ENCODE measurements at regions of chr1 and their contacts with region 1.

Region 1: GRCh38 chr1:36385410-36386257 is at the start of gene STK40:
- DNase-seq: peak; percentile 98
- H3K4me3 ChIP-seq: peak within 1 kb of the TSS; percentile 88
- CTCF ChIP-seq: no peak

Region 2: GRCh38 chr1:35947547-35947946 is 438.1 kb before region 1 on chr1:
- CTCF ChIA-PET with region 1: no interaction called
- POLR2A ChIA-PET with region 1: no interaction called
- DNase-seq: no peak
- H3K4me3 ChIP-seq: no peak overlapping the region
- CTCF ChIP-seq: no peak

Region 3: DNA sequence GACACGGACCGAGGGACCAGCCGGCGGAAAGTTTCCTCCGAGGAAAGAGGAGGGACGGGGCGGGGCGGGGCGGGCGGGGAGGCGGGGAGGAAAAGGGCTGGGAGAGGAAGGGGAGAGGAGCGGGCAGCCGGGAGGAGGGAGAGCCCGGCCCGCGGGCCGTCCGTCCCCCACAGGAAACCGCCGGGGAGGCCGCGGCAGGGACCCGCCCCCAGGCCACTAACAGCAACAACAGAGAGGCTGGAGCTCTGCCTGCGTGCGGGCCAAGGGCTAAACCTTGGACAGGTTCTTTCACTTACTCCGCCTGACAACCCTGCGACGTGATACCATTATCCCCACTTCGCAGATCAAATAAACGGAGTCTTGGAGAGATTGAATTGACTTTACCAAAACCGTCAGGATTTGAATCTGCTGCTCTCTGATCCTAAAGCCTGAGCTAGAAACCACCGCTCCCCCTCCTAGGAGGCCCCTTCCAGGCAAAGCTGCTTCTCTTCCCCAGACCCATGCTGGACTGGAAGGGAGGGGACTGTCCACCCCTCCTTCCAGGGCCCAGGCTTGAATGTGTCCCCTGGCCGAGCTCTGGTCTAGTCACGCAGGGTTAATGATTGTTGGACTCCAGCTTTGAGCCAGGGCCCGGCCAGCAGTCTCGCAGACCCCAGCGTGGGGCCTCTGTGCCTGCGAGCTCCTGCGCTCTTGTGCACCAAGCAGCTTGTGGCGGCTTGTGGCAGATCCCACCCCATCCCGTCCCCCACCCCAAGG is 61.9 kb before region 1 on chr1 and contains the start of gene EVA1B:
- CTCF ChIA-PET with region 1: interaction called, 4 read pairs
- POLR2A ChIA-PET with region 1: interaction called, 19 read pairs
- DNase-seq: no peak
- H3K4me3 ChIP-seq: peak within 1 kb of the TSS; percentile 78
- CTCF ChIP-seq: no peak

Region 4: DNA sequence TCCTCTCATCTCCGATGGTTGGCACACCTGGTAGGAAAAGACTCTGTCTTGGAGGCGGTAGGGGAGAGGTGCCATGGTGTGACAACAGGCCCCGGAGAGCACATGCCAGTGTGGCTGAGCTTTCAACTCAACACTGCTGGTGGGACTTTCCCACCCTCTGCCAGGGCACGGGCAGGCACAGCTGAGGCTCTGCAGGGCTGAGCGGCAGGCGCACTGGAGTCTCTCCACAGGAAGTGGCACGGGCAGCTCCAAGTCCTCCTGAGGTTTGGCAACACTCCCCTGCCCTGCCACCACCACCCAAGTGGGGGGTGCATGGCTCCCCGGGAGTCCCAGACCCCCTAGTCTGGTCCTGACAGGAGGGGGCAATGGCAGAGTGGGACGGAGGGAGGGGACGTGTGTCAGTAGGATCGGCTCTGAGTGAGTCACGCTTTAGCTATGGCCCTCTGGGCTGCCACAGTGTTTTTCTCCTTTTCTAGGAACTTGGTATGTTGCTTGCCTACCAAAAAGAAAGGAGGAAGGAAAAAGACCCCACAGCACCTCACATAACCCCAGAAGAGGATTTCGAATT is 34.9 kb before region 1 on chr1:
- CTCF ChIA-PET with region 1: interaction called, 4 read pairs
- POLR2A ChIA-PET with region 1: interaction called, 44 read pairs
- DNase-seq: no peak
- H3K4me3 ChIP-seq: peak overlapping the region; percentile 40
- CTCF ChIP-seq: no peak

Region 5: DNA sequence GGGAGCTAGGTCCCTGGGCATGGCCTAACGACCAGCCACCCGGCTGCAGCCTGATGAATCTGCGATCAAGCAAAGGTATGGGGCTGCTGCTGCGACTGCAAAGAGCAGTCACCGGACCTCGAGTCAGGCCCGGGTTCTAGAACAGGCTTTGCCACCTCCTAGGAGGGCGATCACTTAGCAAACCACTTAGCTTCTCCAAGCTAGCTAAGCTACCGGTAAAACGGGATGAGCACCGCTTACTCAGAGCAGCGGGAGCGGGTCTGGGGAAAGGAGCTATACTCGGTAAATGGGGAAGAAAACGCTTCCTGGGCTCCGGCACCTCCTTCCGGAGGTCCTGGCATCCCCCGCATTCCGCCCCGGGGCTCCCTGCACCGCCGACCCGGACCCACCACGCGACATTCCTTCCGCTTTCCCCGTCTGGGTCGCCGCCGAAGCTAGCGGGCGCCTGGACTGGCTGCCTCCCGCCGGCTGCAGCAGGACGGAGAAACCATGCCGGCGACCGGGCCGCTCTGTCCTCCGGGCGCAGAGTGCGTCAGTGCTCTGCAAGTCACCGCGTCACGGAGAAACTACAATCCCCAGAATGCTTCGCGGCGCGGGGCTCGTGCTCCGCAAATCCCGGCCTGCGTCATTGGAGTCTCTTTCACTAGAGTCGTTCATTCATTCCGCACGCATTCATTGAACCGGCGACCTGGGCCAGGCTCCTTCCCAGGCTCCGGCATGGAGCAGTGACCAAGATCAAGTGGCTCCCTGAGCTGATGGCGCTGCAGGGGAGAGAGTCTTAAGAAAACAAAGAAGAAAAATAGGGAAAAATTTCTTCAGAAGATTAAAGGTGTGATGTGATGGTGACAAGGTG is 12.0 kb after region 1 on chr1 and contains the start of gene LSM10:
- CTCF ChIA-PET with region 1: interaction called, 4 read pairs
- POLR2A ChIA-PET with region 1: interaction called, 29 read pairs
- DNase-seq: peak; percentile 44
- H3K4me3 ChIP-seq: peak within 1 kb of the TSS; percentile 85
- CTCF ChIP-seq: no peak